Activated CD8-positive, alpha-beta T cell treated with anti-CD3 and anti-CD28 coated beads, Interleukin-2, amount 10 ng/mL, durations not matched to agents 7 days and 5 days (primary cell): ENCODE measurements at regions of chr17 and their contacts with region 1.

Region 1: DNA sequence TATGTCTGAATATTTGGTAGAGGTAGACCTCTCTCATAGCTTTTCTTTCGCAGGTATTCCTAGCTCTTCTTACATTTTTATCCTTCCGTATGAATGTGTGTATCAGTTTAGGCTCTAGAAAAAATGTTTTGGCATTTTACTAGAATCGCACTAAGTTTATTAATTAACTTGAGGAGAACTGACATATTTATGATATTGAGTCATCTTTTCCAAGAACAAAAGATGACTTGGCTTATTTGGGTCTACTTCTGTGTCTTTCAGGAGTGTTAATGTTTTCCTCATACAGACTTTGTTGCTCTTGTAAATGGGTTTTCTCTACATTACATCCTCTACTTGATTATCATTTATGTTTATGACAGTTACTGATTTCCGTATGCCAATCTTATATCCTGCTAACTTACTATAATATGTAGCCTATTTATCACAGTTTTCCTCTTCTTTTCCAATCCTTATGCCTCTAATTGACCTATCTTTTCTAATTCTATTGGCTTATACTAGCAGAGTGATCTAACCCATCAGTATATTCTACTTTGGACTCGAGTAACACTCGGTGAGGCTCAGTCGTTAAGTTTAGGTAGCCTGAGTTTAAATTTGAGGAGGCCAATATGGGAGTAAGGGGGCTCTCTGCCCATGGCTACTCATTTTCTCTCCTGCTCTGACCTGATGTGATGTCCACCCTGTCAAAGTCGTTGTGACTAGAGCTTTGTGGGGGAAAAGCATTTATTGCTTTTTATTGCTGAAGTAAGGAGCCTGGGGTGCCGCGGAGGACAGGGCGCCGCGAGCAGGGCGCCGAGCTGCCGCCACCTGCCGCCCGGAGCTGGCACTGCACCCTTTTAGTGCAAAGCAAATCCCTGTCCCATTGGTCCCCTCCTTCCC is 20.0 kb downstream of the ST6GALNAC1 start:
- DNase-seq: peak; percentile 82
- ATAC-seq: peak; percentile 93
- H3K4me3 Mint-ChIP-seq: no peak overlapping the region
- H3K27ac Mint-ChIP-seq: no peak overlapping the region
- H3K4me1 Mint-ChIP-seq: peaks cover 3% of the 10 kb centered on the region
- H3K27me3 Mint-ChIP-seq: peaks cover 15% of the 10 kb centered on the region

Region 2: DNA sequence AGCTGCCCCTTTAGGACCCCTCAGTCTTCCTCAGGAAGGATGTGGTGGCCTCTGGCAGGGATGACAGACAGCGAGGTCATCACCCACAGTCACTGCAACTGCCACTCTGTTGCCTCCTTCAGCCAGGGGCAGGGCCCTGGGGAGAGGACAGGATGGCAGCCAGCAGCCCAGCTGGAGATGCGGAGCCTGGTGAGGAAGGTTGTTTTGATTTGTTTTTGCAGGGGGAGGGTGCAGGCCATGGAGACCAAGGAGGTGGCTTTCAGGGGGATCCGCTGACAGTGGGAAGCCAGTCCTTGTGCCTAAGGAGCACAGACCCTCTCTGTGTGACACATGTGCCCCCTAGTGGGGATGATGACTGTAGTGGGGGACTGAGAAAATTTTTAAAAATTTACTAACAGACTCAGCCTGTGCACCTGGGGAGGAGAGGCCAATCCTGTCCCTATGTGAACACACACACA is 76.3 kb before region 1 on chr17:
- CTCF ChIA-PET with region 1: interaction called, 22 read pairs
- POLR2A ChIA-PET with region 1: no interaction called
- DNase-seq: peak; percentile 80
- ATAC-seq: peak; percentile 95
- H3K4me3 Mint-ChIP-seq: no peak overlapping the region
- H3K27ac Mint-ChIP-seq: no peak overlapping the region
- H3K4me1 Mint-ChIP-seq: peaks cover 21% of the 10 kb centered on the region
- H3K27me3 Mint-ChIP-seq: peaks cover 8% of the 10 kb centered on the region

Region 3: GRCh38 chr17:76567634-76568432 is 55.7 kb before region 1 on chr17:
- CTCF ChIA-PET with region 1: interaction called, 17 read pairs
- POLR2A ChIA-PET with region 1: no interaction called
- DNase-seq: no peak
- ATAC-seq: no peak
- H3K4me3 Mint-ChIP-seq: no peak overlapping the region
- H3K27ac Mint-ChIP-seq: no peak overlapping the region
- H3K4me1 Mint-ChIP-seq: peaks cover 32% of the 10 kb centered on the region
- H3K27me3 Mint-ChIP-seq: no peaks in the 10 kb centered on the region

Region 4: DNA sequence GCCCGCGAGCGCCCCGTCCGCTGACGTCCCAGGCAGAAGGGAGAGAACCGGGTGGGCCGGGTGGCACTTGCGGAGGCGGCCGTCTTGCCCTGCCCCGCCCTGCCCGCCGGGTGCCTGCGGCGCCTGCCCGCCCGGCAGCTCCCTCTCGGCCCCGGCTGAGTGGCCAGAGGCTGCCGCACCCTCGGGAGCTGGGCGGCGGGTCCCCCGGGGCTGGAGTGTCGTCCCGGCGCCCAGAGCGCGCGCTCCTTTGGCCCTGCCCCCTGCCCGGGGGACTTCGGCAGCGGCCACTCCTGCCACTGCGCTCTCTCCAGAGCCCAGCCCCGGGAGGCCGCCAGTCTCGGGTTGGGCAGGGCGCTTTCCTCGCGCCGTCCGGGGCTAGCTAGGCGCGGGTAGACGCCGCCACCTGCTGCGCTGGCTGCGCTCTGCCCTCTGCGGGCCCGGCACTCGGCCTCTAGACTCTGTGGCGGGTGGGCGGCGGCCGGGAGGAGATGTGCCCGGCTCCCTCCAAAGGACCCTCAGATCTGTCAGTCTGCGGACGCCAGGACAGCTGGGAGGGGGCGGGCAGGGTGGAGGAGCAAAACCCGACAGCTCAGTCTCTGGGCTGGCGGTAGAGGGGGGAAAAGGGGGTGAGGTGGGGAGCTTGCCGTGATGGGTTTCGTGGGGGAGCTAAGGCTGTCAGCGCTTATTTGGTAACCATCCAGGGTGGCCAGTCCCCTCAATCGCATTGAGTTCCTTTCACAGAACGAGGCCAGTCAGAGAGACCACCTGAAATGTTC is 37.5 kb before region 1 on chr17 and contains the start of gene ST6GALNAC2:
- CTCF ChIA-PET with region 1: interaction called, 25 read pairs
- POLR2A ChIA-PET with region 1: interaction called, 4 read pairs
- DNase-seq: peak; percentile 32
- ATAC-seq: peak; percentile 72
- H3K4me3 Mint-ChIP-seq: peak within 1 kb of the TSS; percentile 56
- H3K27ac Mint-ChIP-seq: no peak within 1 kb of the TSS
- H3K4me1 Mint-ChIP-seq: peaks cover 10% of the 10 kb centered on the region
- H3K27me3 Mint-ChIP-seq: peaks cover 57% of the 10 kb centered on the region
- total RNA-seq, gene ST6GALNAC2: not detected

Region 5: GRCh38 chr17:76612977-76613851 is 10.3 kb before region 1 on chr17:
- CTCF ChIA-PET with region 1: interaction called, 35 read pairs
- POLR2A ChIA-PET with region 1: no interaction called
- DNase-seq: no peak
- ATAC-seq: no peak
- H3K4me3 Mint-ChIP-seq: no peak overlapping the region
- H3K27ac Mint-ChIP-seq: peak overlapping the region; percentile 22
- H3K4me1 Mint-ChIP-seq: peaks cover 7% of the 10 kb centered on the region
- H3K27me3 Mint-ChIP-seq: peaks cover 2% of the 10 kb centered on the region

Region 6: GRCh38 chr17:76671123-76671911 is 47.8 kb after region 1 on chr17:
- CTCF ChIA-PET with region 1: interaction called, 23 read pairs
- POLR2A ChIA-PET with region 1: no interaction called
- DNase-seq: peak; percentile 100
- ATAC-seq: peak; percentile 99
- H3K4me3 Mint-ChIP-seq: peak overlapping the region; percentile 89
- H3K27ac Mint-ChIP-seq: peak overlapping the region; percentile 95
- H3K4me1 Mint-ChIP-seq: peaks cover 41% of the 10 kb centered on the region
- H3K27me3 Mint-ChIP-seq: peaks cover 5% of the 10 kb centered on the region

Region 7: GRCh38 chr17:76714822-76715495 is 91.5 kb after region 1 on chr17:
- CTCF ChIA-PET with region 1: interaction called, 15 read pairs
- POLR2A ChIA-PET with region 1: no interaction called
- DNase-seq: peak; percentile 87
- ATAC-seq: no peak
- H3K4me3 Mint-ChIP-seq: peak overlapping the region; percentile 7
- H3K27ac Mint-ChIP-seq: peak overlapping the region; percentile 91
- H3K4me1 Mint-ChIP-seq: peaks cover 62% of the 10 kb centered on the region
- H3K27me3 Mint-ChIP-seq: no peaks in the 10 kb centered on the region